MCF 10A (cell line): ENCODE measurements at regions of chr5 and their contacts with region 1.

Region 1: GRCh38 chr5:124741711-124742496 is 4.5 kb downstream of the ZNF608 start:
- DNase-seq: peak; percentile 95
- H3K4me3 Mint-ChIP-seq: no peak overlapping the region
- H3K27ac Mint-ChIP-seq: no peak overlapping the region
- H3K4me1 Mint-ChIP-seq: peaks cover 12% of the 10 kb centered on the region
- H3K27me3 Mint-ChIP-seq: no peaks in the 10 kb centered on the region
- CTCF ChIP-seq: no peak

Region 2: GRCh38 chr5:124402144-124402581 is 339.7 kb before region 1 on chr5:
- CTCF ChIA-PET with region 1: no interaction called
- POLR2A ChIA-PET with region 1: no interaction called
- intact Hi-C with region 1: no loop called
- DNase-seq: peak; percentile 91
- H3K4me3 Mint-ChIP-seq: no peak overlapping the region
- H3K27ac Mint-ChIP-seq: peak overlapping the region; percentile 92
- H3K4me1 Mint-ChIP-seq: peaks cover 15% of the 10 kb centered on the region
- H3K27me3 Mint-ChIP-seq: no peaks in the 10 kb centered on the region
- CTCF ChIP-seq: no peak

Region 3: GRCh38 chr5:124649491-124650146 is 92.3 kb before region 1 on chr5:
- CTCF ChIA-PET with region 1: no interaction called
- POLR2A ChIA-PET with region 1: interaction called, 23 read pairs
- intact Hi-C with region 1: loop called (anchors 2 kb)
- DNase-seq: peak; percentile 73
- H3K4me3 Mint-ChIP-seq: peak overlapping the region; percentile 41
- H3K27ac Mint-ChIP-seq: peak overlapping the region; percentile 61
- H3K4me1 Mint-ChIP-seq: peaks cover 49% of the 10 kb centered on the region
- H3K27me3 Mint-ChIP-seq: no peaks in the 10 kb centered on the region
- CTCF ChIP-seq: no peak

Region 4: DNA sequence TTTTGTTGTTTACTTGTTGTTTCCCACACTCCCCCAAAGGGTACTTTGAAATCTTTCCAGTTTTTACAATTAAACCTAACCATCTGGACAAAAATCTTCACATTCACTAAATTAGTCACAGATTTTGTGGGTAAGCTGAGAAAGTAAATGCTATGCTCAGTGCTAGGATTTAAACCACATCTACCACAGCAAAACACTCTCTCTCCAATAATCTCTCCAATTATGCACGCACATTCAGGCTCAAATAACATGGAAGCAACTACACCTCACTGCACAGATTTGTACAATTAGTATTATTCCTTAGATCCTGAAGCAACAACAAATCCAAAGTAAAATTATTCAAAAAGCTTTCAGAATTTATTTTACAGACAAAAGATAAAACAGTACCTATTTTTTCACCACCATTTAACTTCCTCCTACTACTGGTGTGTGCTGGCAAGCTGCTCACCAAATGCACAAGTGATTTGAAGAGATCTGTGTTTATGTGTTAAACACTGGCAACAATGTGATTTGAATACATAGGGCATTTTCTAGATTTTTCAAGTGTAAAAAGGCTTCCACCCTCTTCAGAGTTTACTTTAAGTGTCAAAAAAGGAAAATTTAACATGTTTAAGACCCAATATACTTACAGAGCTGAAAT is 12.1 kb before region 1 on chr5:
- CTCF ChIA-PET with region 1: interaction called, 3 read pairs
- POLR2A ChIA-PET with region 1: interaction called, 11 read pairs
- intact Hi-C with region 1: no loop called
- DNase-seq: no peak
- H3K4me3 Mint-ChIP-seq: no peak overlapping the region
- H3K27ac Mint-ChIP-seq: no peak overlapping the region
- H3K4me1 Mint-ChIP-seq: peaks cover 16% of the 10 kb centered on the region
- H3K27me3 Mint-ChIP-seq: peaks cover under 1% of the 10 kb centered on the region
- CTCF ChIP-seq: no peak

Region 5: GRCh38 chr5:124806373-124807077 is 64.6 kb after region 1 on chr5:
- CTCF ChIA-PET with region 1: no interaction called
- POLR2A ChIA-PET with region 1: interaction called, 42 read pairs
- intact Hi-C with region 1: no loop called
- DNase-seq: peak; percentile 96
- H3K4me3 Mint-ChIP-seq: no peak overlapping the region
- H3K27ac Mint-ChIP-seq: no peak overlapping the region
- H3K4me1 Mint-ChIP-seq: peaks cover 5% of the 10 kb centered on the region
- H3K27me3 Mint-ChIP-seq: no peaks in the 10 kb centered on the region
- CTCF ChIP-seq: no peak

Region 6: GRCh38 chr5:125043781-125044391 is 302.0 kb after region 1 on chr5:
- CTCF ChIA-PET with region 1: no interaction called
- POLR2A ChIA-PET with region 1: interaction called, 4 read pairs
- intact Hi-C with region 1: loop called (anchors 5 kb)
- DNase-seq: peak; percentile 99
- H3K4me3 Mint-ChIP-seq: no peak overlapping the region
- H3K27ac Mint-ChIP-seq: peak overlapping the region; percentile 70
- H3K4me1 Mint-ChIP-seq: peaks cover 34% of the 10 kb centered on the region
- H3K27me3 Mint-ChIP-seq: no peaks in the 10 kb centered on the region
- CTCF ChIP-seq: no peak

Region 7: DNA sequence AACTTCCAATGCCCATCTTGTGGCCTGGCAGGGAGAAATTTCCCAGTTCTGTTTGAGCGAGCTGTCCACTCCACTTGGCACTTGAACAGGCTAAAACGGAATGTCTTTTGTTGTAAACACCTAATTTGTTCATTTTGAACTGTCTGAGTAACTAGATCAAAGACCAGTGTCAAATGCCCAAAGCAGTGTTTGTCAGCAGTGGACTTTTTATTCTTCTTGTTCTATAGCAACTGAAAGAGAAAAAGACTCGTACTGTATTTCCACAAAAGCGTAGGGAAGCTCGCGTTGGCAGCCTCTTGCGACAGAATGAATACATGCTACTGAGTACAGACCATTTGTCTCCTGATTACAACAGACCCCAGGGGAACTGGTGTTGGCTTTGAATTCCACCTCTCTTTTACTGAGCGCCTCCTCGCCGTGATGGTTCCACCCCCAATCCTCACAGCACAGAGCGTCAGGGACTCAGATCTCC is 606.4 kb after region 1 on chr5:
- CTCF ChIA-PET with region 1: no interaction called
- POLR2A ChIA-PET with region 1: no interaction called
- intact Hi-C with region 1: no loop called
- DNase-seq: no peak
- H3K4me3 Mint-ChIP-seq: no peak overlapping the region
- H3K27ac Mint-ChIP-seq: no peak overlapping the region
- H3K4me1 Mint-ChIP-seq: no peaks in the 10 kb centered on the region
- H3K27me3 Mint-ChIP-seq: no peaks in the 10 kb centered on the region
- CTCF ChIP-seq: no peak